Activated naive CD4-positive, alpha-beta T cell treated with anti-CD3 and anti-CD28 coated beads for 36 hours (primary cell): ENCODE measurements at regions of chrX and their contacts with region 1.

Region 1: GRCh38 chrX:23667239-23668177 is at the start of gene PRDX4:
- DNase-seq: peak; percentile 82
- H3K4me3 Mint-ChIP-seq: peak within 1 kb of the TSS; percentile 84
- H3K27ac Mint-ChIP-seq: peak within 1 kb of the TSS; percentile 90
- H3K4me1 Mint-ChIP-seq: peaks cover 30% of the 10 kb centered on the region
- H3K27me3 Mint-ChIP-seq: no peaks in the 10 kb centered on the region
- total RNA-seq, gene PRDX4: 39.6 to 40.0 TPM

Region 2: DNA sequence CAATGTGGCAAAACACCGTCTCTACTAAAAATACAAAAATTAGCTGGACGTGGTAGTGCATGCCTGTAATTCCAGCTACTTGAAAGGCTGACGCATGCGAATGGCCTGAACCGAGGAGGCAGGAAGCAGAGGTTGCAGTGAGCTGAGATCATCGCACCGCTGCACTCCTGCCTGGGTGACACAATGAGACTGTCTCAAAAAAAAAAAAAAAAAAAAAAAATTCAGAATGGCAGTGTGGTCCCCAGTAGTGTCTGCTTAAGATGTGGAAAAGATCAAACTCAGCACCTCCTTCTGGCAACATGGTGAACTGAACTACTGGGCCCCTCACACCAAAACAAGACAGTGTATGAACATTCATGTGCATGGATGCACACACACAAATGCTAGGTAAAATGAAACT is 1694.8 kb before region 1 on chrX:
- CTCF ChIA-PET with region 1: no interaction called
- intact Hi-C with region 1: loop called (anchors 5 kb)
- DNase-seq: peak; percentile 64
- H3K4me3 Mint-ChIP-seq: no peak overlapping the region
- H3K27ac Mint-ChIP-seq: peak overlapping the region; percentile 87
- H3K4me1 Mint-ChIP-seq: peaks cover 35% of the 10 kb centered on the region
- H3K27me3 Mint-ChIP-seq: no peaks in the 10 kb centered on the region

Region 3: GRCh38 chrX:23732704-23733103 is 65.2 kb after region 1 on chrX:
- CTCF ChIA-PET with region 1: no interaction called
- intact Hi-C with region 1: loop called (anchors 1 kb)
- DNase-seq: peak; percentile 8
- H3K4me3 Mint-ChIP-seq: peak overlapping the region; percentile 55
- H3K27ac Mint-ChIP-seq: peak overlapping the region; percentile 88
- H3K4me1 Mint-ChIP-seq: peaks cover 41% of the 10 kb centered on the region
- H3K27me3 Mint-ChIP-seq: no peaks in the 10 kb centered on the region

Region 4: GRCh38 chrX:23952984-23953907 is 285.7 kb after region 1 on chrX:
- CTCF ChIA-PET with region 1: no interaction called
- intact Hi-C with region 1: loop called (anchors 1 kb)
- DNase-seq: peak; percentile 70
- H3K4me3 Mint-ChIP-seq: peak overlapping the region; percentile 79
- H3K27ac Mint-ChIP-seq: peak overlapping the region; percentile 97
- H3K4me1 Mint-ChIP-seq: peaks cover 16% of the 10 kb centered on the region
- H3K27me3 Mint-ChIP-seq: no peaks in the 10 kb centered on the region

Region 5: DNA sequence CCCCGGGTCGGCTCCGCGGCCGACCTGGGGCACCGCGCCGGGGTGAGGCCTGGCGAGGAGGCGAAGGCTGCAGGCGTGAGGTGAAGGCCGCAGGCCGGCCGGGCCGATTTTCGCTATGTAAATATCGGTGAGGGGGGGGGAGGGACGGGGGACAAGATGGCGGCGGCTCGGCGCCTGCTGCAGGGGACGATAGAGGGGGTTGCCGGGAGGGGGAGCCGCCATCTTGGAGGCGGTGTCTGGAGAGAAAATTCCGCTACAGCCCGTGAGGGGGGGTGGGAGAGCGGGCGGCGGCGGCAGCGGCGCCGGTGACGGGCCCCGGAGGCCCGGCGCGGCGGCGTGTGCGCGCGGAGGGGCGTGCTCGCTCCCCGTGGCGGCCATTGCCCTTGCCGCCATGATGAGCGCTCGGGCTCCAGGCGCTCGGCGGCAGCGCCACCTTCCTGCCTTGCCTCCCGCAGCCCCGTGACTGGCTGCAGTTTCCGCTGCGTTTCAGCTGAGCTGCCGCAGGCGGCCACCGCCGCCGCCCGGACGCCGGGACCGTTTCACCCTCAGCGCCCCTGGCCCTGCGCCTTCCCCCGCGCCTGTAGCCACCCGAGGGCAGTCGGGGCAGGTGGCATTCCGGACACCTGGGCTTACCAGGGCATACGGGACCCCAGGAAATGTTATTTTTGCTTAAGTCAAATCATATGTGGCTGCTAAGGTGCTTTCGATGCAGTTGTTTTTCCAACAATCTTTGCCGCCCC is 482.7 kb after region 1 on chrX:
- CTCF ChIA-PET with region 1: no interaction called
- intact Hi-C with region 1: loop called (anchors 5 kb)
- DNase-seq: peak; percentile 89
- H3K4me3 Mint-ChIP-seq: peak overlapping the region; percentile 80
- H3K27ac Mint-ChIP-seq: peak overlapping the region; percentile 89
- H3K4me1 Mint-ChIP-seq: peaks cover 56% of the 10 kb centered on the region
- H3K27me3 Mint-ChIP-seq: no peaks in the 10 kb centered on the region